ENCODE measurements at regions of chr2 and their contacts with region 1.

Region 1: GRCh38 chr2:121530212-121530705 is 421 bp upstream of the RNU4ATAC start:
- DNase-seq: peak; percentile 61
- ATAC-seq: peak; percentile 66
- H3K4me3 Mint-ChIP-seq: peak overlapping the region; percentile 93
- H3K27ac Mint-ChIP-seq: peak overlapping the region; percentile 99
- H3K4me1 Mint-ChIP-seq: peaks cover 31% of the 10 kb centered on the region
- H3K27me3 Mint-ChIP-seq: no peaks in the 10 kb centered on the region
- CTCF ChIP-seq: no peak

Region 2: GRCh38 chr2:121400201-121400600 is 130.1 kb before region 1 on chr2:
- CTCF ChIA-PET with region 1: interaction called, 4 read pairs
- POLR2A ChIA-PET with region 1: interaction called, 3 read pairs
- intact Hi-C with region 1: loop called (anchors 1 kb)
- DNase-seq: no peak
- ATAC-seq: no peak
- H3K4me3 Mint-ChIP-seq: no peak overlapping the region
- H3K27ac Mint-ChIP-seq: no peak overlapping the region
- H3K4me1 Mint-ChIP-seq: peaks cover 2% of the 10 kb centered on the region
- H3K27me3 Mint-ChIP-seq: no peaks in the 10 kb centered on the region
- CTCF ChIP-seq: no peak

Region 3: DNA sequence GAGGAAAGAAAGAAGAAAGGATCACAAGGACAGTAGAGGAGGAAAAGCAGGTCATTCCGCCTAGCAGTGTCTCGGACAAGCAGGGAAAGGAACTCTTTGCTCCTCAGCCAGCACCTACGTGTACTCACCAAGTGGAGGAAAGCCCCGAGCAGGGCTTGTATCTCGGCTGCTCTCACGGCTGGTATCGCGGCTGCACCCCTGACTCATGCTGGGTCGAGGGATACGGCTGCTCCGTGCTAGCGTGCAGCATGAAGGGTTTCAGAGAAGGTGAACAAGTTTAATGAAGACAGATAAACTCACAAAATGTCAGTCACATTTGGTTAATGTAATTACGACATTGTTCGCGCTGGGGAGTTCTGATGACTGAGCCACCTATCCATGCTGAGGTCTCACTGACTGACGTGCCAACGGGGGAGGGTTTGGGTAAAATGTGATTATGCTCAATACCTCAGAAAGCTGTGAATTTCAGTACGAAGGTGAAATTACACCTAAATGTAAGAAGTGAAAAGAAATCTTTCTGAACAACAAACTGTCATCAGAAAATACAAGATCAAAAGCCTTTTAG is 111.7 kb before region 1 on chr2:
- CTCF ChIA-PET with region 1: no interaction called
- POLR2A ChIA-PET with region 1: no interaction called
- intact Hi-C with region 1: no loop called
- DNase-seq: no peak
- ATAC-seq: no peak
- H3K4me3 Mint-ChIP-seq: no peak overlapping the region
- H3K27ac Mint-ChIP-seq: no peak overlapping the region
- H3K4me1 Mint-ChIP-seq: no peaks in the 10 kb centered on the region
- H3K27me3 Mint-ChIP-seq: no peaks in the 10 kb centered on the region
- CTCF ChIP-seq: no peak

Region 4: GRCh38 chr2:121561617-121562268 is 31.5 kb after region 1 on chr2:
- CTCF ChIA-PET with region 1: no interaction called
- POLR2A ChIA-PET with region 1: interaction called, 8 read pairs
- intact Hi-C with region 1: loop called (anchors 1 kb)
- DNase-seq: no peak
- ATAC-seq: no peak
- H3K4me3 Mint-ChIP-seq: no peak overlapping the region
- H3K27ac Mint-ChIP-seq: no peak overlapping the region
- H3K4me1 Mint-ChIP-seq: peaks cover 15% of the 10 kb centered on the region
- H3K27me3 Mint-ChIP-seq: no peaks in the 10 kb centered on the region
- CTCF ChIP-seq: no peak

Region 5: GRCh38 chr2:121649596-121650314 is 119.5 kb after region 1 on chr2:
- CTCF ChIA-PET with region 1: interaction called, 7 read pairs
- POLR2A ChIA-PET with region 1: interaction called, 268 read pairs
- intact Hi-C with region 1: loop called (anchors 1 kb)
- DNase-seq: peak; percentile 87
- ATAC-seq: peak; percentile 93
- H3K4me3 Mint-ChIP-seq: peak overlapping the region; percentile 100
- H3K27ac Mint-ChIP-seq: peak overlapping the region; percentile 100
- H3K4me1 Mint-ChIP-seq: peaks cover 51% of the 10 kb centered on the region
- H3K27me3 Mint-ChIP-seq: no peaks in the 10 kb centered on the region
- CTCF ChIP-seq: no peak

Region 6: DNA sequence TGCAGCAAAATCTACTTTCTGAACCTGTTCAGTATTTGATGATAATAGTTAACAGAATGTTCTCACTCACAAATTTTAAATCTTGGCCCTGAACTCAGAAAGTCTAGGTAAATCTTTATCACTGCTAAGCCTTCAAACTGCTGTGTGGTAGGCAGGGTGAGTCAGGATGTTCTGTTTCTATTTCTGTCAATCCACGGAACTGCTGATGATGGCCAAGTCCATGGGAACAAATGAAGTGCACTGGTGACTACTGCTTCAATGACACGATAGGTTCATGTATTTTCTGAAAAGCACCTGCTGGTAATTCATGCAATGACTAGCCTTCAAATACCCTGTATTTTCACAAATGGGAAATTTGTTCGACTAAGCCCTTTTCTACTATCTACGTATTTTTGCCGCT is 192.2 kb after region 1 on chr2:
- CTCF ChIA-PET with region 1: interaction called, 4 read pairs
- POLR2A ChIA-PET with region 1: interaction called, 29 read pairs
- intact Hi-C with region 1: loop called (anchors 1 kb)
- DNase-seq: no peak
- ATAC-seq: no peak
- H3K4me3 Mint-ChIP-seq: no peak overlapping the region
- H3K27ac Mint-ChIP-seq: no peak overlapping the region
- H3K4me1 Mint-ChIP-seq: peaks cover 3% of the 10 kb centered on the region
- H3K27me3 Mint-ChIP-seq: no peaks in the 10 kb centered on the region
- CTCF ChIP-seq: no peak

Region 7: GRCh38 chr2:121755236-121756111 is 225.2 kb after region 1 on chr2 and contains the start of gene TSN:
- CTCF ChIA-PET with region 1: interaction called, 3 read pairs
- POLR2A ChIA-PET with region 1: interaction called, 22 read pairs
- intact Hi-C with region 1: loop called (anchors 1 kb)
- DNase-seq: peak; percentile 96
- ATAC-seq: peak; percentile 99
- H3K4me3 Mint-ChIP-seq: peak within 1 kb of the TSS; percentile 93
- H3K27ac Mint-ChIP-seq: peak within 1 kb of the TSS; percentile 80
- H3K4me1 Mint-ChIP-seq: peaks cover 34% of the 10 kb centered on the region
- H3K27me3 Mint-ChIP-seq: no peaks in the 10 kb centered on the region
- CTCF ChIP-seq: no peak
- total RNA-seq, gene TSN: 60.8 and 61.3 TPM in 2 replicates

Region 8: GRCh38 chr2:121974897-121975661 is 444.8 kb after region 1 on chr2:
- CTCF ChIA-PET with region 1: no interaction called
- POLR2A ChIA-PET with region 1: no interaction called
- intact Hi-C with region 1: loop called (anchors 5 kb)
- DNase-seq: peak; percentile 20
- ATAC-seq: peak; percentile 76
- H3K4me3 Mint-ChIP-seq: peak overlapping the region; percentile 73
- H3K27ac Mint-ChIP-seq: no peak overlapping the region
- H3K4me1 Mint-ChIP-seq: peaks cover 6% of the 10 kb centered on the region
- H3K27me3 Mint-ChIP-seq: no peaks in the 10 kb centered on the region
- CTCF ChIP-seq: no peak

Measured in activated B cell treated with CpG ODN at 0.5 μM for 24 hours (primary cell).